K562 (cell line): ENCODE measurements at regions of chr1 and their contacts with region 1.

Region 1: DNA sequence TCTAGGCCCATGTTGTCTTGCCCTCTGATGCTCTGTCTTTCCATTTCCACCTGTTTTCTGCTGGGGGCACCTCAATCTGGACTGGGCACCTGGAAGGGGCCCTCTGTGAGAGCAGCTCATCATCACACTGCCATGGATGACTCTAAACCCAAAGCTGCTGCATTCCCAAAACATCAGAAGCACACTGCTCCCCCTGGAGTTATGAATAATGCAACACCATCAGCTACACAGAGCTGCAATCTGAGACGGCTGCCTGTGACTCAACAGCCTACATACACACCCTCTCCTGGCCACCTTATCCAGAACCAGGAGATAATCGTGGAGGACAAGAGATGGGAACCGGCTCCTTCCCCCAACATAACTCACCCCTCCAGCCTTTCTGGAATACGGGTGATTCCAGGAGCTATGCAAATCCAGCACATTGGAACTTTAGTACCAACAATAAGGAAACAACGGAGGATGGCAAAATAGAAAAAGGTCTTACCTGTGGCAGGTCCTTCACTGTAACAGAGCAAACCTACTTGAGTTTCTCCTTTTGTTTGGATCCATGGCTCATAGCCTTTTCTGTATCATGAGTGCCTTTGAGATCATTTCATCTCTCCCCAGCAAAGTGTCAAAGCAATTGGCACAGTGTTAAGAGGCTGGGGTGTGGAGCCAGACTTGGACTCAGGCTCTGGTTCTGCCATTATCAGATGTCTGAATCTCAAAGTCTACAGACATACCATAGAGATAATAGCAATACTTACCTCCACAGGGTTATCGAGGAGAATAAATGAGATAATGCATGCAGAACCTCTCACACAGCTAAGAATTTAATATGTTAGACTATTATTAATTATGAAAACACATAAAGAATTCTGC is 29.3 kb downstream of the AK2 start:
- DNase-seq: peak; percentile 38 to 69 (median 48)
- ATAC-seq: peak; percentile 70
- H3K4me3 ChIP-seq: no peak overlapping the region
- H3K27ac ChIP-seq: no peak overlapping the region
- H3K4me1 ChIP-seq: peaks cover 7 to 75% of the 10 kb centered on the region in 2 experiments
- H3K27me3 ChIP-seq: no peaks in the 10 kb centered on the region
- CTCF ChIP-seq: peak; percentile 56 to 66 (median 66)
- EP300 ChIP-seq: no peak
- POLR2A ChIP-seq: no peak
- RAD21 ChIP-seq: peak; percentile 60 to 64

Region 2: DNA sequence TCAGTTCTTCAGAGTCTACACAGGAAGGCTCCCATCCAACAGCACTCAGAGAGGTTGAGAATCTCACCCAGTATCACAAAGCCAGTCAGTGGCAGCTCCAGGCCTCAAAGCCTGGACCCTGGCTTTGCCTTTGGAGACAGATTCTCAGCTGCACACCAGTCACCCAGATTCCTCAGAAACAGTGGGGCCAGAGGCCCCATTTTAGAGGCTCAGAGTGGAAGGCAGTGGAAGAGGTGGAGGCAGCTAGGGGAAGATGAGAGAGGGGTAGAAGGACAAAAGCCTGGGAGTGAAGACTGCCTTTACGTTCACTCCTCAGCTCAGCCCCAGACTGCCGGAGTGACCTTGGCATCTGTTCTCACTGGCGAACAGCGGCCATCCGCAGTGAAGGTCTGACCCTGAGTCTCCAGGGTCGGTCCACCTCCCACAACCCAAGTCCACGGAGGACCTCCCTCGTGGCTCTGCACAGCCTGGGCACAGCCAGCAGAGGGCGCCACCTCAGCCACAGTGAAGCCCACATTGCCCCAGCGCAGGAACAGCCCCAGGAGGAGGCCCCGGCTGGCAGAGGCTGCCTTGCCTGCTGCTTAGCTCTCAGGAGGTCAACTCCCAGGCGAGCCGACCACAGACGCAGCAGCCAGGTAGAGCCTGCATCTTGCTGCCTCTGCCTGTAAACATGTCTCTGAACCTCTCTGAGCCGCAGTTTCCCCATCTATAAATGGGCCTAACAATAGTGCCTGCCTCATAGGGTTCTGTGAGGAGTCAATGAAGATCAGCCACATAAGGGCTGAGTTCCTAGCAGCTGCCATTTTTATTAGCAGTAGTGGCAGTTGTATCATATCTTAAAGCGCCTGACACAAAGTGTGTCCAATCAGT is 130.8 kb before region 1 on chr1:
- CTCF ChIA-PET with region 1: interaction called, 11 read pairs
- POLR2A ChIA-PET with region 1: interaction called, 3 read pairs
- in situ Hi-C with region 1: no loop called
- intact Hi-C with region 1: no loop called
- DNase-seq: peak; percentile 72 to 89 (median 86)
- ATAC-seq: peak; percentile 85
- H3K4me3 ChIP-seq: no peak overlapping the region
- H3K27ac ChIP-seq: no peak overlapping the region
- H3K4me1 ChIP-seq: peaks cover 2 to 6% of the 10 kb centered on the region in 2 experiments; a peak in 3 of 5 replicates
- H3K27me3 ChIP-seq: peaks cover 15 to 39% of the 10 kb centered on the region in 2 experiments; a peak in 4 of 5 replicates
- CTCF ChIP-seq: peak; percentile 86 to 99 (median 90)
- EP300 ChIP-seq: no peak
- POLR2A ChIP-seq: no peak
- RAD21 ChIP-seq: peak; percentile 65 to 85

Region 3: DNA sequence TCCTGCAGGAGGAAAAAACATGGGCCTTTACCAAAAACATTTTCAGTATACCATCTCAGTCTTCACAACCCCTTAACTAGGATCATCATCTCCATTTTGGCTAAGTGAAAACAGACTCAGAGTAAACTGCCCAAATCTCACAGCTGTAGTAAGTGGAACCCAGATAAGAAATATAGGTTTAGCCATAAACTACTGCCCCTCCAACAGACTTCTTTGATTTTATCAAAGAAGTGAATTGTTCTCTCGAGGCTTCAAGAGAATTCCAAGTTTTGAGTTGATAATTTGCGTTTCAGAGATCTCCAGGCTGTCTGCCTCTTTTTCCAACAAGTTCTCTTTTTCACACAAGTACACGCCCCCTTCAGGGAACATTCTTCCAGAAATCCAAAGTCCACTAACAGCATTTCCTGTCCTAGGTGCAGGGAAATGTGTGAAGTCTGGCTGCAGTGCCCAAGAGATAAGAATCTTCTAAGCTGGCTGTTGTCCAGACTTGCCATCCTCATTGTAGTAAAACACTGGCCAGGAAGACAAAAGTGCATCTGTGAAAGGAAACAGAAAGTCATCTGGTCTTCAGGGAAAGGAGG is 73.6 kb before region 1 on chr1:
- CTCF ChIA-PET with region 1: interaction called, 20 read pairs
- POLR2A ChIA-PET with region 1: interaction called, 4 read pairs
- in situ Hi-C with region 1: no loop called
- intact Hi-C with region 1: loop called (anchors 2 kb)
- DNase-seq: peak in 1 of 4 experiments; percentile 27
- ATAC-seq: peak; percentile 25; the same call in 2 of the 3 replicates
- H3K4me3 ChIP-seq: no peak overlapping the region
- H3K27ac ChIP-seq: no peak overlapping the region
- H3K4me1 ChIP-seq: peaks cover 0 to 6% of the 10 kb centered on the region in 2 experiments; a peak in 3 of 5 replicates
- H3K27me3 ChIP-seq: peaks cover 4 to 5% of the 10 kb centered on the region in 2 experiments; a peak in 3 of 5 replicates
- CTCF ChIP-seq: no peak
- EP300 ChIP-seq: no peak
- POLR2A ChIP-seq: no peak
- RAD21 ChIP-seq: no peak

Region 4: GRCh38 chr1:32992489-32993323 is 14.7 kb before region 1 on chr1:
- CTCF ChIA-PET with region 1: no interaction called
- POLR2A ChIA-PET with region 1: interaction called, 95 read pairs
- in situ Hi-C with region 1: no loop called
- intact Hi-C with region 1: no loop called
- DNase-seq: peak; percentile 63 to 77 (median 66)
- ATAC-seq: peak; percentile 88
- H3K4me3 ChIP-seq: no peak overlapping the region
- H3K27ac ChIP-seq: no peak overlapping the region
- H3K4me1 ChIP-seq: peaks cover 15 to 22% of the 10 kb centered on the region in 2 experiments
- H3K27me3 ChIP-seq: no peaks in the 10 kb centered on the region
- CTCF ChIP-seq: no peak
- EP300 ChIP-seq: no peak
- POLR2A ChIP-seq: no peak
- RAD21 ChIP-seq: no peak

Region 5: DNA sequence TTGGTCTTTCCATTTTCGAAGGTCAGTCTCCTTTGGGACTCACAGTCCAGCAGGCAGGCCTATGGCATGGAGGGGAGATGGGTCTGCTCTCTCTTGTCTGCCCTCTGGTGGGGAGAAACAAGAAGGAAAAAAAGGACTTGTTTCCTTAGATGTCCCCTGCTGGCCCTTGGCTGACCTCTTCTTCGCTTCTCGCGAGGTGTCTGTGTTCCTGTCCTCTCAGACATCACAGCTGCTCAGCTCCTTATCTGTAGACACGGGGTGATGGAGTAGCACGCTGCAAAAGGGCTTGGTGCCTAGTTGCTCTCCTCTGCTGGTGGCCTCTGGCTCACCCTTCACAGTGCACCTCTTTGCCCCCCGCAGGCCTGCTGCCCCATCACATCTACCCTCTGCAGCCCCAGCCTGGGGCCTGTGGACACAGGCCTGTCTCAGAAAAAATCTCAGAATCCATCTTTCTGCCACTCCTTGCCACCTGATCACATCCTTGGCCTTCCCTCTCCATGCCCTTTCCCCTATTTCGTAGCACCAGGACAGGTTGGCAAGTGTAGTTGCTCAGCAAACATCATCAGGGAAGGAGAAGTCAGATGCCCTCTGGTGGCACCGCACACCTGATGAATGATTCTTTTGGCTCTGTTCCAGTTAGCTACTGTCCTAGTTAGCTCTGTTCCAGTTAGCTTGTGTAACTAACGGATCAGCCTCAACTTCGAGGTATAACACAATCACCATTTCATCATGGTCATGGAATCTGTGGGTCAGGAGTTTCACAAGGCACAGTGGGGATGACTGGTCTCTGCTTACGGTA is 48.0 kb after region 1 on chr1:
- CTCF ChIA-PET with region 1: no interaction called
- POLR2A ChIA-PET with region 1: no interaction called
- in situ Hi-C with region 1: no loop called
- intact Hi-C with region 1: loop called (anchors 2 kb)
- DNase-seq: peak; percentile 81 to 94 (median 84)
- ATAC-seq: peak; percentile 97
- H3K4me3 ChIP-seq: no peak overlapping the region
- H3K27ac ChIP-seq: no peak overlapping the region
- H3K4me1 ChIP-seq: peaks cover 4 to 12% of the 10 kb centered on the region in 2 experiments; a peak in 3 of 5 replicates
- H3K27me3 ChIP-seq: peaks cover 7 to 9% of the 10 kb centered on the region in 2 experiments; a peak in 2 of 5 replicates
- CTCF ChIP-seq: peak; percentile 93 to 96 (median 94)
- EP300 ChIP-seq: peak; percentile 20
- POLR2A ChIP-seq: no peak
- RAD21 ChIP-seq: peak; percentile 88 to 94

Region 6: GRCh38 chr1:33152685-33153432 is 145.4 kb after region 1 on chr1:
- CTCF ChIA-PET with region 1: no interaction called
- POLR2A ChIA-PET with region 1: no interaction called
- in situ Hi-C with region 1: no loop called
- intact Hi-C with region 1: no loop called
- DNase-seq: no peak
- ATAC-seq: no peak
- H3K4me3 ChIP-seq: no peak overlapping the region
- H3K27ac ChIP-seq: no peak overlapping the region
- H3K4me1 ChIP-seq: no peaks in the 10 kb centered on the region
- H3K27me3 ChIP-seq: peaks cover 16 to 46% of the 10 kb centered on the region in 2 experiments; a peak in 4 of 5 replicates
- CTCF ChIP-seq: no peak
- EP300 ChIP-seq: no peak
- POLR2A ChIP-seq: no peak
- RAD21 ChIP-seq: no peak

Region 7: GRCh38 chr1:33460947-33461629 is 453.7 kb after region 1 on chr1:
- CTCF ChIA-PET with region 1: no interaction called
- POLR2A ChIA-PET with region 1: no interaction called
- in situ Hi-C with region 1: no loop called
- intact Hi-C with region 1: no loop called
- DNase-seq: no peak
- ATAC-seq: no peak
- H3K4me3 ChIP-seq: no peak overlapping the region
- H3K27ac ChIP-seq: no peak overlapping the region
- H3K4me1 ChIP-seq: peaks cover 0 to 3% of the 10 kb centered on the region in 2 experiments; a peak in 1 of 5 replicates
- H3K27me3 ChIP-seq: peaks cover 10 to 28% of the 10 kb centered on the region in 2 experiments; a peak in 4 of 5 replicates
- CTCF ChIP-seq: no peak
- EP300 ChIP-seq: no peak
- POLR2A ChIP-seq: no peak
- RAD21 ChIP-seq: no peak